Kidney (tissue), 22 donors: ENCODE measurements at regions of chr12 and their contacts with region 1.

Region 1: GRCh38 chr12:98593351-98594049 is at the start of gene SLC25A3:
- DNase-seq: peak; percentile 97 to 99 (median 99)
- H3K4me3 ChIP-seq: peak within 1 kb of the TSS; percentile 87 to 96 (median 92)
- H3K27ac ChIP-seq: peak within 1 kb of the TSS; percentile 97 to 98
- H3K4me1 ChIP-seq: peaks cover 0 to 4% (median 3%) of the 10 kb centered on the region in 3 donors
- H3K27me3 ChIP-seq: no peaks in the 10 kb centered on the region
- CTCF ChIP-seq: no peak
- total RNA-seq, gene SLC25A3: 418 TPM

Region 2: GRCh38 chr12:98644711-98645402 is 51.4 kb after region 1 on chr12 and contains the starts of genes APAF1 and IKBIP:
- intact Hi-C with region 1: loop called (anchors 10 kb)
- DNase-seq: peak; percentile 97 to 99 (median 98)
- H3K4me3 ChIP-seq: peak within 1 kb of the TSS; percentile 76 to 88 (median 87)
- H3K27ac ChIP-seq: peak within 1 kb of the TSS; percentile 79 to 87
- H3K4me1 ChIP-seq: no peaks in the 10 kb centered on the region
- H3K27me3 ChIP-seq: no peaks in the 10 kb centered on the region
- CTCF ChIP-seq: no peak
- total RNA-seq, gene APAF1: 16.1 TPM
- total RNA-seq, gene IKBIP: 10.9 TPM

Region 3: GRCh38 chr12:99121521-99121920 is 528.0 kb after region 1 on chr12:
- intact Hi-C with region 1: no loop called
- DNase-seq: no peak
- H3K4me3 ChIP-seq: no peak overlapping the region
- H3K27ac ChIP-seq: no peak overlapping the region
- H3K4me1 ChIP-seq: no peaks in the 10 kb centered on the region
- H3K27me3 ChIP-seq: no peaks in the 10 kb centered on the region
- CTCF ChIP-seq: no peak